Psoas muscle (tissue), 8 donors: ENCODE measurements at regions of chr19 and their contacts with region 1.

Region 1: DNA sequence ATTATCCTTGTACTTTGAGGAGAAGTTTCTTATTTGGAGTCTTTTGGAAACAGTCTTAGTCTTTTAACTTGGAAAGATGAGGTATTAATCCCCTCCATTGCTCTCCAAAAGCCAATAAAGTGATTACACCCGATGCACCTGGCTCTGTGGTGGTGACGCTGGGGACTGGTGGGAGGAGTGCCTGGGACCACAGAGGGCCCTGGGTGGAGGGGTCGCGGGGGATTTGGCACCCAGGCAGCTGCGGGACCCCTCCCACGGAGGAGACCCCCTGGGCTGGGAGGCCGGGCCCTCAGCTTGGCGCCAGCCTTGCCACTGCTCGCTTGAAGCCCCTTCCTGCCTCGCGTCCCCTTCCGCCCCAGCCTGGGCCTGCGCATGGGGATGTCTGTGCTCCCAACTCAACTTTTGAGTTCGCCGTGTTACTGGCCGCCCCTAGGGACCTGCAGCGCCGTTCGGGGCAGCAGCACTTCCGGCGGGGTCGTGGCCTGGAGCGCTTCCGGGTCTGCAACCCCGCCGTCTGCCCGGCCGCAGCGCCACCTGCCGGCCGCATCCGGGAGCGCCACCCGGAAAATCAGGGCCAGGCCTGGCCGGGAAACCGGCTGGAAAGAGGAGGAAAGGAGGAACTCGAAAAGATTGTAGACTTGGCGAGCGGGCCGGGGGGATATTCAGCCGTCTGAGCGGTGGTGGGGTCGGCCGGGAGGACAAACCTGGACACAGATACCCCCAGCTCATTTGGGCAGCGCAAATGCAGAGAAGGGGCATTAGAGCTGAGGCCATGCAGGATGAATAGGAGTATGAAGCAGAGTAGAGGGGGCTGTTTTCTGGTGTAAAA is 8.4 kb downstream of the PEAK3 start:
- DNase-seq: peak; percentile 84 to 91
- ATAC-seq: peak; percentile 13 to 32 (median 20)
- H3K4me3 ChIP-seq: peak overlapping the region; percentile 97
- H3K27ac ChIP-seq: peak overlapping the region; percentile 99
- H3K4me1 ChIP-seq: peaks cover 49% of the 10 kb centered on the region
- H3K27me3 ChIP-seq: no peaks in the 10 kb centered on the region
- CTCF ChIP-seq: peak; percentile 95

Region 2: DNA sequence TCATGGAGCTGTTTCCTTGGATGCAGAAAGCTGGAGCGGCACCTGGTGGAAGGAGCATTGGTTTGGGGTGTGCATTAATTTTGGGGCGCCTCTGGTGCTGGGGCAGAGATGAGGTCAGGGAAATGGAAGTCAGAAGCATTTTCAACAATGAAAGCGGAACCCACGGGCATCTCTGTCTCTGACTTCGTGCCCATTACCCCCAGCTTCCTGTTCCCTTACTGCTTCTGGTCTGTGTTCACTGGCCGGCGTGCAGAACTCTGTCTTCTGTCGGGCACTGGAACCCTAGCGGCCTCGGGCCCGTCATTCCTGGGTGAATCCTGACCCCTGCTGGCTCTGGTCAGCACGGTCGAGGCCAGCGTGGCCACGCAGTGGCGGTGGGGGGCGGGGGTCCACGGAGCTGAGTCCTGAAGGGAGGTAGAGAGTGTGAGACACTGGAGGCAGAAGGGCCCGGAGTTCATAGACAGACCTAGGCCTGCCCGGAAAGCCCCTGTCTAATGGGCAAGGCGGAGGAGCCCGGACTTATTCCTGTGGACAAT is 42.3 kb after region 1 on chr19:
- intact Hi-C with region 1: loop called in 1 of 2 experiments (anchors 5 kb)
- DNase-seq: peak; percentile 64 to 80
- ATAC-seq: peak; percentile 71 to 89 (median 81)
- H3K4me3 ChIP-seq: no peak overlapping the region
- H3K27ac ChIP-seq: no peak overlapping the region
- H3K4me1 ChIP-seq: no peaks in the 10 kb centered on the region
- H3K27me3 ChIP-seq: peaks cover 0 to 7% (median 0%) of the 10 kb centered on the region in 3 donors
- CTCF ChIP-seq: peak; percentile 45

Region 3: DNA sequence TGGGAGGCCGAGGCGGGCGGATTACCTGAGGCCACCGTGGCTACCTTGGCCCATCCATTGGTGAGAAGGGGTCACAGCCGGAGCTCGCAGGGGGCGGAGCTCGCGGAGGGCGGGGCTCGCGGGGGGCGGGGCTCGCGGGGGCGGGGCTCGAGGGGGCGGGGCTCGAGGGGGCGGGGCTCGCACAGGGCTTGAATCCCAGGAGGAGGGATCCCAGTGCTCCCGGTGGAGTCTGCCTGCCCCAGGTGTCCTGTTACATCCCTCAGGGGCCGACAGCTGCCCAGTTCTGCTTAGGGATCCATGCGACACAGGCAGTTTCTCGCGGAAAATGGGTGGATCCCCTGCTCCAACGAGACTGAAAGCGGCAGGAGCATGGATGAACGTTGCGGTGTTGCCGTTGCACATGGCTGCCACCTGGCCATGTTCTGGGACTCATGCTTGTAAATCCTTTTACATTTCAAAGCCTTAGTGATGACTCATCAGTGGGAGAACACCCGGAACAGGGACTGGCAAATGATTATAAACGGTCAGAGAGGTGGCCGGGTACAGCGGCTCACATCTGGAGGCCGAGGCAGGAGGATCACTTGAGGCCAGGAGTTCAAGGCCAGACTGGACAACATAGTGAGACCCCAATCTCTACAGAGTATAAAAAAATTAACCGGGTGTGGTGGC is 111.6 kb after region 1 on chr19:
- intact Hi-C with region 1: loop called in 1 of 2 experiments (anchors 5 kb)
- DNase-seq: peak; percentile 27 to 70
- ATAC-seq: peak; percentile 75 to 93 (median 84)
- H3K4me3 ChIP-seq: peak overlapping the region; percentile 18
- H3K27ac ChIP-seq: no peak overlapping the region
- H3K4me1 ChIP-seq: peaks cover 5% of the 10 kb centered on the region
- H3K27me3 ChIP-seq: peaks cover 0 to 5% (median 1%) of the 10 kb centered on the region in 3 donors
- CTCF ChIP-seq: no peak

Region 4: GRCh38 chr19:2391118-2391725 is 117.7 kb after region 1 on chr19:
- intact Hi-C with region 1: loop called (anchors 2 to 5 kb)
- DNase-seq: no peak
- ATAC-seq: peak; percentile 64 to 80 (median 72)
- H3K4me3 ChIP-seq: no peak overlapping the region
- H3K27ac ChIP-seq: no peak overlapping the region
- H3K4me1 ChIP-seq: no peaks in the 10 kb centered on the region
- H3K27me3 ChIP-seq: peaks cover 0 to 5% (median 0%) of the 10 kb centered on the region in 3 donors
- CTCF ChIP-seq: peak; percentile 71